CD14-positive monocyte (primary cell): ENCODE measurements at regions of chr21 and their contacts with region 1.

Region 1: DNA sequence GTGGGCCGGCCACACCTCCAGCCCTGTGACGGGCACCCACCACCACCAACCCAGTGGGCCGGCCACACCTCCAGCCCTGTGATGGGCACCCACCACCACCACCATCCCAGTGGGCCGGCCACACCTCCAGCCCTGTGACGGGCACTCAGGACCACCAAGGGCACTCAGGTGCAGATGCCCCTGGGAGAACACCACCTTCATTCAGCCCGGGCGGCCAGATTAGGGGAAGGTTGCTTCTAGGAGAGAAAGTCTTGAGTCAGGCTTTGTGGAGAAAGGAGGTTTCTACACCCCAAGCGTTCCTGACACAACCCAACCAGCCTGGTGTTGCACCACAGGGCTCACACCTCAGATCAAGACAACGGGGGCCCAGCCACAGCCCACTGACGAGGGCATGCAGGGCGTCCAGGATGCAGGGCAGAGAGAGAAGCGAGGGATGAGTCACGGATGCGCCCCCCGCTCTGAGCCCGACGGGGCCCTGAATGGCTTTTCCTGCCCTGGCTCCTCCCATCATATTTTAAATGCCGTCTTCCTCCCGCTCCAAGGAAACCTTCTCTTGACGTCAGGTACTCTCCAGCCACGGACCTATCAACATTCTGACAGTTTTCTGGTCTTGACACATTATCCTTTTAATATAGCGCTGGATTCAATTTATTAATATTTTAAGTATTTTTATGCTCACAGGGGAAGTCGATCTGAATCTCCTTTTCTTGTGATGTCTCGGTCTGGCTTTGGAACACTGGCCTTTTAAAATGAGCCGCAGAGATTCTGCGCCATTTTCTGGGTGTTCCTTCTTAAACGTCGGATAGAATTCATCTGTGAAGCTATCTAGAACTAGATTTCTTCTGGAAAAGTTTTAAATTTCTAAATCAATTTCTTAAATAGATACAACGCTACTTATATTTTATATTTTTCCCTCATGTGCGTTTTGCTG is 631 bp upstream of the SPATC1L start:
- DNase-seq: peak; percentile 66 to 82 (median 78)
- H3K4me3 ChIP-seq: peak overlapping the region; percentile 49 to 80 (median 63)
- H3K4me3 Mint-ChIP-seq: peak overlapping the region; percentile 85 to 90
- H3K27ac ChIP-seq: peak overlapping the region; percentile 68 to 80
- H3K27ac Mint-ChIP-seq: peak overlapping the region; percentile 89 to 96 (median 95)
- H3K4me1 ChIP-seq: peaks cover 4 to 5% of the 10 kb centered on the region in 2 donors
- H3K4me1 Mint-ChIP-seq: peaks cover 15% of the 10 kb centered on the region
- H3K27me3 ChIP-seq: no peaks in the 10 kb centered on the region
- H3K27me3 Mint-ChIP-seq: peaks cover 0 to 2% (median 0%) of the 10 kb centered on the region in 3 donors
- CTCF ChIP-seq: no peak

Region 2: DNA sequence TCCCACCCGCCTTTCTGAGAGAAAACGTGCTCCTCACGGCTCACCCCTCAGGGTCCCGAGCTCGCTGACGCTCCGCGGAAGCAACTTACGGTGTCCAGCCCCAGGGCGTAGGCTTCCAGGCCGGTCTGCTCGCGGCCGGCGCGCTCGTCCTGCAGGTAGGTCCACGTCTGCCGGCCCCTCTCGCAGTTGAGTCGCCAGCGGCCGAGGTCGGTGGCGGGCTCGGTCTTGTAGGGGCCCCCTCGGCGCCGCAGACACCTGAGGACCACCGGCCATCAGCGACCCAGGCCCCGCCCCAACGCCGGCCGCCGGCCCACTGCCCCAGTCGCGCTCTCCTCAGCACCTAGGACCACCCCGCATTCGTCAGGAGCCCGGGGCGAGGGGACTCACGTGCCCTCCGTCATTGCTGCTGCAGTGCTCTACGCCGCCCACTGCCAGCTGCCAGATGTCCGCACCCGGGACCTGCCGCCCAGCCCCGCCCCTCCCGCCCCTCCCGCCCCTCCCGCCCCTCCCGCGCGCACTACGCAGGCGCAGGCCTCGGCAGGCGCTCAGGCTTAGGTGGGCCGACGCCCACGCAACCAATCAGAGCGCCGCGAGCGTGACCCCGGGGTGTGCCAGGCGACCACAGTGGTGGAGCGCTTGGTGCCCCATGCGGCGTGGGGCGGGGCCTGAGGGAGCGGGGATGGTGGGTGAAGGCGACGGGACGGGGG is 43.6 kb after region 1 on chr21 and contains the start of gene LSS:
- intact Hi-C with region 1: loop called (anchors 2 to 5 kb)
- DNase-seq: peak; percentile 88 to 97 (median 95)
- H3K4me3 ChIP-seq: peak within 1 kb of the TSS; percentile 62 to 90 (median 64)
- H3K4me3 Mint-ChIP-seq: peak within 1 kb of the TSS; percentile 95 to 99
- H3K27ac ChIP-seq: peak within 1 kb of the TSS in 1 of 2 donors; percentile 68
- H3K27ac Mint-ChIP-seq: peak within 1 kb of the TSS; percentile 47 to 89 (median 85)
- H3K4me1 ChIP-seq: peaks cover 17 to 24% of the 10 kb centered on the region in 2 donors
- H3K4me1 Mint-ChIP-seq: peaks cover 34% of the 10 kb centered on the region
- H3K27me3 ChIP-seq: no peaks in the 10 kb centered on the region
- H3K27me3 Mint-ChIP-seq: peaks cover 2 to 7% (median 2%) of the 10 kb centered on the region in 3 donors
- CTCF ChIP-seq: no peak
- polyA plus RNA-seq, gene LSS: 4.1 to 20.0 (median 4.9) TPM

Region 3: GRCh38 chr21:46458315-46459023 is 273.6 kb after region 1 on chr21 and contains the start of gene DIP2A:
- intact Hi-C with region 1: loop called in 1 of 2 experiments (anchors 5 kb)
- DNase-seq: peak; percentile 93 to 97 (median 97)
- H3K4me3 ChIP-seq: peak within 1 kb of the TSS; percentile 88 to 99 (median 96)
- H3K4me3 Mint-ChIP-seq: peak within 1 kb of the TSS; percentile 91 to 93
- H3K27ac ChIP-seq: peak within 1 kb of the TSS; percentile 88 to 93
- H3K27ac Mint-ChIP-seq: peak within 1 kb of the TSS; percentile 87 to 98 (median 93)
- H3K4me1 ChIP-seq: peaks cover 25 to 45% of the 10 kb centered on the region in 2 donors
- H3K4me1 Mint-ChIP-seq: peaks cover 51% of the 10 kb centered on the region
- H3K27me3 ChIP-seq: no peaks in the 10 kb centered on the region
- H3K27me3 Mint-ChIP-seq: peaks cover 0 to 3% (median 0%) of the 10 kb centered on the region in 3 donors
- CTCF ChIP-seq: no peak
- polyA plus RNA-seq, gene DIP2A: 4.6 to 55.4 (median 6.1) TPM